ENCODE measurements at regions of chr15 and their contacts with region 1.

Region 1: GRCh38 chr15:63195569-63196015 is 6.2 kb downstream of the RAB8B start:
- DNase-seq: no peak
- H3K4me3 Mint-ChIP-seq: peak overlapping the region; percentile 2
- H3K27ac Mint-ChIP-seq: peak overlapping the region; percentile 53
- H3K4me1 Mint-ChIP-seq: peaks cover 89% of the 10 kb centered on the region
- H3K27me3 Mint-ChIP-seq: no peaks in the 10 kb centered on the region

Region 2: DNA sequence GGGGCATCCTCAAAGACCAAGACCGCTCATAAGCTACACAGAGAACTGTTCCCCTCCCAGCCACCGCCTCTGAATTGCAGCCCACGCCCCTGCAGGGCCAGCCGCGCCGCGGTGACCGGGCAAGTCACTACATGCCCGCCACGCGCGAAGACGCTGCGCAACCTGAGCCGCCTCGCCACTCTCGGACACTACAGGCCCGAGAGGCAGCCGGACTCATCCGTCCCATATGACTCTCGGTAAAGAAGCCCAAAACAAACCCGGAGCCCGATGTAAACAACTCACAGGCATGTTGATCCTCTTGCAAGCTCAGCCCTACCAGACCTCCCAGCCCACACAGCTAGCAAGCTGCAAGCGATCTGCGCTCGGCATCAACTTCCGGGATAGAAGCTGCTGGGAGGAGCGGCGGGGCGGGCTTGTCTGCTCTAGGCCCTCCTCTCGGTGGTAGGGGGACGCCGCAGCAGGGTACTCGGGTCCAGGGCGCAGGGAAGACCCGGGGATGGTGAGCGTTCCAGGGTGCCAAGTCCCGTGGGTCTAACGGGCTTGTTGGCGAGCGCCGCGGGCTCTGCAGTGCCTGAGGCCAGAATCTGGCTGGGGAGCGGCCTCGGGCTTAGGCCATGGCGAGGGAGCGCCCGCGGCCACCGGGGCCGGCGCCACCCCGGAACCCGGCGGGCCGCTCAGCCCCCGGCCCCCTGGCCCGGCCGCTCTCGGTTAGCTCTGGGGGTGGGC is 38.3 kb before region 1 on chr15 and contains the start of gene RPS27L:
- CTCF ChIA-PET with region 1: interaction called, 12 read pairs
- POLR2A ChIA-PET with region 1: interaction called, 56 read pairs
- DNase-seq: peak; percentile 91
- H3K4me3 Mint-ChIP-seq: peak within 1 kb of the TSS; percentile 99
- H3K27ac Mint-ChIP-seq: peak within 1 kb of the TSS; percentile 98
- H3K4me1 Mint-ChIP-seq: peaks cover 25% of the 10 kb centered on the region
- H3K27me3 Mint-ChIP-seq: no peaks in the 10 kb centered on the region
- total RNA-seq, gene RPS27L: 171 to 173 TPM

Region 3: GRCh38 chr15:63212050-63213004 is 16.7 kb after region 1 on chr15:
- CTCF ChIA-PET with region 1: interaction called, 10 read pairs
- POLR2A ChIA-PET with region 1: interaction called, 177 read pairs
- DNase-seq: no peak
- H3K4me3 Mint-ChIP-seq: peak overlapping the region; percentile 24
- H3K27ac Mint-ChIP-seq: peak overlapping the region; percentile 87
- H3K4me1 Mint-ChIP-seq: peaks cover 73% of the 10 kb centered on the region
- H3K27me3 Mint-ChIP-seq: no peaks in the 10 kb centered on the region